ENCODE measurements at regions of chr3 and their contacts with region 1.

Region 1: DNA sequence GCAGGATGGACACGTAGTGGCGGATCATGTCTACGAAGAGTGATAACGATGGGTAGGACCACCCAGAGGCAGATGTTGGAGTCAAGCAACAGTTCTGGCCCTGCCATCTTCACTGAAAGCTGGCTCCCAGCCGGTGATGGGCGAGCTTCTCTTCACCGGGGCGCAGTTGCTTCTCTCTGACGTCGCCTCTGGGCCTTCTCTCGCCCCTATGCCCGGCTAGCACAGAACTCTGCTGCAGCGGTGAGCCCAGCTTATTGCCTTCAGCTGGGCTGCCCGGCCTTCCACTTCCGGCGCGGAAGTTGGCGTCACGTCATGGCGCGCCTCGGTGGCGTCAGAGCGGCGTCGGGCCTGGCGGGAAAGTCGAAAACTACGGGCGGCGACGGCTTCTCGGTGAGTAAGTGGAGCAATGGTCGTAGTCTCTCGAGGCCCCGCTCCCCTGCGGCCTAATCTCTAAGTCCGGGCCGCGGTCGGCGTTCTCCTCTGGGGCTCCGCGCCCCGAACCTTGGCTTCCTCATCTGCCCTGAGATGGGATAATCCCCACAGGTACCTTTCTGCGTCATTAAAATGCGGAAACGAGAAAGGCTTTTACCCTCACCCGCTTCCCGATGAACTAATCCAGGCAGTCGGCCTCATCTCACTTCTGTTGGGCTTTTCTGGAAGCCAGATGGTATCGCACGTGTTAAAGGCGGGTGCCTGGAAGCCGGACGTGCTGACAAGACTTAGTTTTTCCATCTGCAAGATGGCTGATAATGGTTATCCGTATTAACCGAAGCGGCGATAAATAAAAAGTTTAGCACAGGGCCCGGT is at the start of gene FANCD2:
- DNase-seq: peak; percentile 92
- H3K4me3 ChIP-seq: peak within 1 kb of the TSS; percentile 55 to 84 (median 81)
- H3K27ac ChIP-seq: peak within 1 kb of the TSS; percentile 88
- H3K4me1 ChIP-seq: peaks cover 13% of the 10 kb centered on the region
- H3K27me3 ChIP-seq: no peaks in the 10 kb centered on the region
- CTCF ChIP-seq: no peak
- POLR2A ChIP-seq: peak; percentile 79
- total RNA-seq, gene FANCD2: 23.4 and 26.8 TPM in 2 replicates

Region 2: GRCh38 chr3:10010486-10011465 is 15.5 kb before region 1 on chr3:
- CTCF ChIA-PET with region 1: interaction called, 9 read pairs
- POLR2A ChIA-PET with region 1: interaction called, 4 read pairs
- dilution Hi-C with region 1: no loop called
- intact Hi-C with region 1: loop called (anchors 1 kb)
- DNase-seq: peak; percentile 93
- H3K4me3 ChIP-seq: peak overlapping the region; percentile 49 to 71 (median 66)
- H3K27ac ChIP-seq: no peak overlapping the region
- H3K4me1 ChIP-seq: peaks cover 21% of the 10 kb centered on the region
- H3K27me3 ChIP-seq: no peaks in the 10 kb centered on the region
- CTCF ChIP-seq: no peak
- POLR2A ChIP-seq: peak; percentile 41

Region 3: DNA sequence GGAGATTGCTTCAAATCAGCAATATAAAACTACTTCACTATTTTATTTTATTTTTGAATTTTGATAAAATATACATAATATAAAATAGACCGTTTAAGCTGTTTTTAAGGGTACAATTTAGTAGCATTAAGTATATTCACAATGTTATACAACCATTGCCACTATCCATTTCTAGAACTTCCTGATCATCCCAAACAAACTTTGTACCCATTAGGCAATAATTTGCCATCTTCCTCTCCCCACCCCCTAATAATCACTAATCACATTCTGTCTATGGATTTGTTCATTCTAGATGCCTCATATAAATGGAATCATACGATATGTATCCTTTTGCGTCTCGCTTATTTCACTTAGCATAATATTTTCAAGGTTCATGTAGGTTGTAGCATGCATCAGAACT is 28.8 kb after region 1 on chr3:
- CTCF ChIA-PET with region 1: no interaction called
- POLR2A ChIA-PET with region 1: no interaction called
- dilution Hi-C with region 1: no loop called
- intact Hi-C with region 1: no loop called
- DNase-seq: no peak
- H3K4me3 ChIP-seq: no peak overlapping the region
- H3K27ac ChIP-seq: no peak overlapping the region
- H3K4me1 ChIP-seq: no peaks in the 10 kb centered on the region
- H3K27me3 ChIP-seq: no peaks in the 10 kb centered on the region
- CTCF ChIP-seq: no peak
- POLR2A ChIP-seq: no peak